ENCODE measurements at regions of chr20 and their contacts with region 1.

Region 1: GRCh38 chr20:3710703-3711483 is 1.5 kb downstream of the SIGLEC1 start:
- DNase-seq: peak in 1 of 2 donors; percentile 70
- H3K4me3 ChIP-seq: peak overlapping the region in 2 of 3 donors; percentile 0 to 23
- H3K27ac ChIP-seq: peak overlapping the region in 1 of 2 donors; percentile 55
- H3K4me1 ChIP-seq: peaks cover 0 to 3% of the 10 kb centered on the region in 2 donors
- H3K27me3 ChIP-seq: no peaks in the 10 kb centered on the region
- CTCF ChIP-seq: peak; percentile 68 to 92 (median 83)
- POLR2A ChIP-seq: no peak

Region 2: DNA sequence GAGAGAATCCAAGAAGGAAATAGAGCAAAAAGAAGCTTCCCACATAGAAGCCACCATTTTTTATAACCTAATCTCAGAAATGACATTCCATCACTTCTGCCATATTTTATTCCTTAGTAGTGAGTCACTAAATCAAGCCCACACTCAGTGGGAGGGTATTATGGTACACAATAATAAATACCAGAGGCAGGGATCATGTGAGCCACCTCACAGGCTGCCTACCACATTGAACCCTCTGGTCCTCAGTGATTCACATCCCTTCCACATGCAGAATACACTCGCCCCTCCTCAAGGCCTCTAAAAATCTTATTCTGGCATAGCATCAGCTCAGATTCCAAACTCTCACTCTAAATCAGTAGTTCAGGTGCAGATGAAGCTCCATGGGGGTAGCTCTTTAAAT is 1125.1 kb before region 1 on chr20:
- intact Hi-C with region 1: loop called (anchors 5 kb)
- DNase-seq: no peak
- H3K4me3 ChIP-seq: no peak overlapping the region
- H3K27ac ChIP-seq: no peak overlapping the region
- H3K4me1 ChIP-seq: no peaks in the 10 kb centered on the region
- H3K27me3 ChIP-seq: no peaks in the 10 kb centered on the region
- CTCF ChIP-seq: no peak
- POLR2A ChIP-seq: no peak

Region 3: DNA sequence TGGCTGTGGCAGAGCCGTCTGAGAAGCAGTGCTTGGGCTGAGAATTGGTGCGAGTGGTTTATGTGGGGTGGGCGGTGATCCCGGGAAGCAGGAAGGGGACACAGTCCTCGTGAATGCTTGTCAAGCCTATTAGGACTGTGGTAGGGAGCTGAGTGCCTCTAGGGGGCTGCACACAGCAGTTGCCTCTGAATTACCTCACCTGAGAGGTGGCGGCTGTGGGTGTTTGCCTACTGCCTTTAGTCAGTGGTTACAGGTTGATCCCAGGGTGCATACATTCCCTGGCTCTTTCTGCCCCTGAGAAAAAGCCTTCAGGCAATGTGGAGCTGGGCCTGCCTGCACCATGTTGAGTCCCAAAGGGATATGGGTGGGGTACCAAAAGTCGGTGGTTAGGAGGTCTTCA is 114.6 kb after region 1 on chr20:
- intact Hi-C with region 1: no loop called
- DNase-seq: no peak
- H3K4me3 ChIP-seq: no peak overlapping the region
- H3K27ac ChIP-seq: no peak overlapping the region
- H3K4me1 ChIP-seq: peaks cover 0 to 4% of the 10 kb centered on the region in 2 donors
- H3K27me3 ChIP-seq: no peaks in the 10 kb centered on the region
- CTCF ChIP-seq: no peak
- POLR2A ChIP-seq: no peak

Measured in breast epithelium (tissue), 4 donors.